Activated CD4-positive, alpha-beta T cell treated with anti-CD3 and anti-CD28 coated beads, Interleukin-2, amount 10 ng/mL, durations not matched to agents 7 days and 5 days (primary cell): ENCODE measurements at regions of chr22 and their contacts with region 1.

Region 1: GRCh38 chr22:28783786-28784671 is 11.5 kb downstream of the CCDC117 start:
- DNase-seq: no peak
- H3K4me3 Mint-ChIP-seq: no peak overlapping the region
- H3K27ac Mint-ChIP-seq: no peak overlapping the region
- H3K4me1 Mint-ChIP-seq: peaks cover 14% of the 10 kb centered on the region
- H3K27me3 Mint-ChIP-seq: no peaks in the 10 kb centered on the region

Region 2: DNA sequence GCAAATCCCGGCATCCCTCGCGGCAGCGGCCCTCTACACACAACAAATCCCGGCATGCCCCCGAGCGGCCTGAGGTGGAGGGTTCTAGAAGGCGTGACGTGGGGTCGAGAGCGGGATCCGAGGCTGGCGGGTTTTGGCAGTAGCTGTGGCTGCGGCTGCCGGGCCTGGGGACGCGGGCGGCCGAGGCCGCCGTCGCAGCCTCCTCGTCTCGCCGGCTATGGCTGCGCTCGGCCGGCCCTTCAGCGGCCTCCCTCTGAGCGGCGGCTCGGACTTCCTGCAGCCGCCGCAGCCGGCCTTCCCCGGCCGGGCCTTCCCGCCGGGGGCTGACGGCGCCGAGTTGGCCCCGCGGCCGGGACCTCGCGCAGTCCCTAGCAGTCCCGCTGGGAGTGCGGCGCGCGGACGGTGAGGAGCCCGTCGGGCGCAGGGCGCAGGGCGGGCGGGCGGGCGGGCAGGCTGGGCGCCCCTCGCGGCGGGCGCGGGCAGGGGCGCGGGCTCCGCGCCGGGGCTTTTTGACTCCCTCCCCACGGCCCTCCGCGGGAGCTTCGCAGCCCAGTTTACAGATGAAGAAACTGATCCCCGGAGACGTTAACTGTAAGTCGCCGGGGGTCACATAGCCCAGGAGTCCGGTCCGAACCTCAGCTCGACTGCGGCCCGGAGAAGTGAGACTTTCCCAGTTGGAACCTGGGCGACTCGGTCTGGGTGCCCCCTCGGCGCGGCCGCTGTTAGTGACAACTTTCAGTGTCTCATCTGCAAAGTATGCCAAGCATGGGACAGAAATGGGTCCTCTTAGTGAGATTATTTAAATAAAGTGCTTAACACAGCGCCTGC is 11.2 kb before region 1 on chr22 and contains the start of gene CCDC117:
- CTCF ChIA-PET with region 1: interaction called, 10 read pairs
- POLR2A ChIA-PET with region 1: no interaction called
- DNase-seq: peak; percentile 95
- H3K4me3 Mint-ChIP-seq: peak within 1 kb of the TSS; percentile 94
- H3K27ac Mint-ChIP-seq: peak within 1 kb of the TSS; percentile 94
- H3K4me1 Mint-ChIP-seq: peaks cover 25% of the 10 kb centered on the region
- H3K27me3 Mint-ChIP-seq: no peaks in the 10 kb centered on the region
- total RNA-seq, gene CCDC117: 30.2 to 31.9 TPM

Region 3: GRCh38 chr22:28800308-28801077 is 16.5 kb after region 1 on chr22 and contains the start of gene XBP1:
- CTCF ChIA-PET with region 1: interaction called, 10 read pairs
- POLR2A ChIA-PET with region 1: interaction called, 3 read pairs
- DNase-seq: peak; percentile 90
- H3K4me3 Mint-ChIP-seq: peak within 1 kb of the TSS; percentile 95
- H3K27ac Mint-ChIP-seq: peak within 1 kb of the TSS; percentile 100
- H3K4me1 Mint-ChIP-seq: peaks cover 51% of the 10 kb centered on the region
- H3K27me3 Mint-ChIP-seq: no peaks in the 10 kb centered on the region
- total RNA-seq, gene XBP1: 159 to 184 TPM

Region 4: DNA sequence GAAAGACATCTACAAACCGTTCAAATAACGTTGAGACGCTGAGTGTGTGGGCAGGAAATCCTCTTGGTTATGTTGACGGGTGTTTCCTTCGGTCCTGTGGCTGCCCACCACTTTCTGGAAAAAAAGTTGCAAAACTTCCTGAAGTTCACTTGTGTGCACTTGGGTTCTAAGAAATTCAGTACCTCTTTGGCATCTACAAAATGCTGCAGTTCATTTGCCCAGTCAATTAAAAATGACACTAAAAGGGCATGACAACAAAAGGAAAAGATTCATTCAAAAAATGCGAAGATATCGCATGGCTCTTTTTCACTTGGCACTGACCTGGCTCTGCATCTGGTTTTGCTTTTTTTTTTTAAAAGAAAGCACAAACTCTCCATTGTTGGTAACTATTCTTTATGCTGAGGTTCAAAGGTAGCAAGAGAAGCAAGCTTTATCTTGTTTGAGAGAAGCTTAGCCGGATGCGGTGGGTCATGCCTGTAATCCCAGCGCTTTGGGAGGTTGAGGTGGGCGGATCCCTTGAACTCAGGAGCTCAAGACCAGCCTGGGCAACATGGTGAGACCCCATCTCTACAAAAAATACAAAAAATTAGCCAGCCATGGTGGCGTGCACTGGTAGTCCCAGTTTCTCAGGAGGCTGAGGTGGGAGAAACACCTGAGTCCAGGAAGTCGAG is 26.9 kb after region 1 on chr22:
- CTCF ChIA-PET with region 1: no interaction called
- POLR2A ChIA-PET with region 1: no interaction called
- DNase-seq: peak; percentile 65
- H3K4me3 Mint-ChIP-seq: peak overlapping the region; percentile 76
- H3K27ac Mint-ChIP-seq: peak overlapping the region; percentile 93
- H3K4me1 Mint-ChIP-seq: peaks cover 78% of the 10 kb centered on the region
- H3K27me3 Mint-ChIP-seq: no peaks in the 10 kb centered on the region

Region 5: GRCh38 chr22:28829358-28830181 is 45.5 kb after region 1 on chr22:
- CTCF ChIA-PET with region 1: interaction called, 13 read pairs
- POLR2A ChIA-PET with region 1: interaction called, 3 read pairs
- DNase-seq: peak; percentile 82
- H3K4me3 Mint-ChIP-seq: no peak overlapping the region
- H3K27ac Mint-ChIP-seq: peak overlapping the region; percentile 68
- H3K4me1 Mint-ChIP-seq: peaks cover 46% of the 10 kb centered on the region
- H3K27me3 Mint-ChIP-seq: no peaks in the 10 kb centered on the region